Activated CD4-positive, alpha-beta memory T cell treated with anti-CD3 and anti-CD28 coated beads for 36 hours (primary cell): ENCODE measurements at regions of chr5 and their contacts with region 1.

Region 1: GRCh38 chr5:140926443-140927227 is 536 bp downstream of the PCDHAC1 start:
- DNase-seq: peak; percentile 55
- H3K4me3 Mint-ChIP-seq: no peak overlapping the region
- H3K27ac Mint-ChIP-seq: no peak overlapping the region
- H3K4me1 Mint-ChIP-seq: peaks cover 6% of the 10 kb centered on the region
- H3K27me3 Mint-ChIP-seq: peaks cover 46% of the 10 kb centered on the region

Region 2: GRCh38 chr5:141040771-141041426 is 114.3 kb after region 1 on chr5:
- CTCF ChIA-PET with region 1: interaction called, 4 read pairs
- POLR2A ChIA-PET with region 1: no interaction called
- intact Hi-C with region 1: loop called (anchors 5 kb)
- DNase-seq: peak; percentile 83
- H3K4me3 Mint-ChIP-seq: no peak overlapping the region
- H3K27ac Mint-ChIP-seq: no peak overlapping the region
- H3K4me1 Mint-ChIP-seq: no peaks in the 10 kb centered on the region
- H3K27me3 Mint-ChIP-seq: peaks cover 9% of the 10 kb centered on the region

Region 3: GRCh38 chr5:141223112-141223783 is 296.6 kb after region 1 on chr5 and contains the start of gene PCDHB14:
- CTCF ChIA-PET with region 1: no interaction called
- POLR2A ChIA-PET with region 1: no interaction called
- intact Hi-C with region 1: no loop called
- DNase-seq: no peak
- H3K4me3 Mint-ChIP-seq: no peak within 1 kb of the TSS
- H3K27ac Mint-ChIP-seq: no peak within 1 kb of the TSS
- H3K4me1 Mint-ChIP-seq: peaks cover 5% of the 10 kb centered on the region
- H3K27me3 Mint-ChIP-seq: peaks cover 46% of the 10 kb centered on the region
- total RNA-seq, gene PCDHB14: not detected